Head of caudate nucleus (tissue), 42 donors: ENCODE measurements at regions of chr16 and their contacts with region 1.

Region 1: DNA sequence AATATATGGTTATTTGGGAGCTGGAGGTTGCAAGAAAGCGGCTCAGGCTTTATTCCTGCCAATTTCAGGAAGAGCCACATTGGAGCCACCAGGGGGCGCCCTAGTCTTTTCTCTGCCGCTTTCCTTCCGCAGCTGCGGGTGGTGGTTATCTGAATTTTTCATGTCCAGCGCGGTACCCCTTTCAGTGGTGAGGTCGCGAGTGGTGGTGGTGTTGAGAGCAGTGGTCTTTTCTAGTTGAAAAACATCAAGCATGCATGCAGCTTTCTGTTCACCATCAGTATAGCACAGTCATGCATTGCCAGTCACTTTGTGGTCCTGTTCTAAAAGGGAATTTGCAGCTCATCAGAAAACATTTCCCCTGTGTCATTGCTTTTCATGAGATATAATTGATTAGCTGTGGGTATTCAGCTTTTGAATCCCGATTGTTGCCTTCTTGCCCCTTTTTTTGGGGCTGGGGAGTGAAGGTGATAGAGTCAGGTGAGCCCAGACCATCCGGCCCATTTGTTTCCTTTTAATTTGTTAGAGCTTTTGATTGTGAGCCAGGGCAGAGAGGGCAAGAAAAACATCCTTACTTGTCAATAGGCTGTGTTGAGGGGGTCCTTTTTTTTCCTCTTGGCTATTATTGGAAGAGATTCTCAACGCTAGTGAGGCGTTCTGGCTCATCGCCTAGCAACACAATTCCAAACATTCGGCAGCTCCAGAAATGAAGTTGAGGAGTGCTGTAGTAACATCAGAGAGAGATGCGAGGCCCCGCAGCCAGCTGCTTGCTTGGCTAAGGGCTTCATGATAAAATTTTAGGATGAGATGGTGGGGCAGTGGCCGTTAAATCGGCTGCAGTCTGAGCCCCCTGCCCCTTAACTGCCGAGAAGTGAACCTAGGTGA is 119.0 kb downstream of the SNX29 start:
- DNase-seq: peak; percentile 53 to 94 (median 82)

Region 2: GRCh38 chr16:12147681-12148080 is 52.2 kb after region 1 on chr16:
- intact Hi-C with region 1: no loop called
- DNase-seq: peak in 12 of 42 donors; percentile 10 to 53 (median 28)

Region 3: GRCh38 chr16:12260647-12261262 is 165.2 kb after region 1 on chr16:
- intact Hi-C with region 1: loop called (anchors 10 kb)
- DNase-seq: no peak